ENCODE measurements at regions of chr6 and their contacts with region 1.

Region 1: DNA sequence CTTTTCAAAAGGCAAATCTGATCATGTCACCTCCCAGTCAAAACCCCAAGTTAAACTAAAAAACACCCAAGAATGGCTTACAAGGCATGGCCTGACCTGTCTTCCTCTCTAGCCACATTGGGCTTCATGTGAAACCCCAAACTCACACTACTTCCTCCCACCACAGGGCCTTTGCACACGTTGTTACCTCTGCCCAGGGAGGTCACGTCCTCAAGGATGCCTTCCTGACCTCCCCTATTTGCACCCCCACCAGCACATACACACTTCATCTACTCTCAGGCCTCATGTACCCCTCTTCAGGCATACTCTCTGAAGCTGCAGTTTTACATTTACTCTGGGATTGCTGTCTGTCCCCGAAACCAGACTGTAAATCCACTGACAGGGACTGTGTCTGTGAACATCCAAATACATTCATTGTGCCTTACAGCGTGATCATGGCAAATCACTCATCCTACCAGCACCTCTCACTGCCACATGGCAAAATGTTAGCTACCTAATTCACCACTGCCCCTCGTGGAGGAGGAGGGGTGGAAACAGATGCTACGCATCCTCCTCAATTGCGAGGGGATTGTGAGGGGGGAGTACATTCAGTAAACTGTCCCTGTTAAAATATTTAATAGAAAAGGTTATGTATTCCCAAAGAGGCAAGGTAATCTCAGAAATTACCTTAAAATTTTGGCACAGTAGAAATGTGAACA is 6.0 kb downstream of the EZR start:
- DNase-seq: no peak

Region 2: GRCh38 chr6:158718461-158719046 is 94.6 kb before region 1 on chr6:
- intact Hi-C with region 1: loop called (anchors 5 kb)
- DNase-seq: peak in 1 of 10 donors; percentile 37

Measured in posterior cingulate gyrus (tissue), 11 donors.